CD8-positive, alpha-beta T cell (primary cell): ENCODE measurements at regions of chr1 and their contacts with region 1.

Region 1: DNA sequence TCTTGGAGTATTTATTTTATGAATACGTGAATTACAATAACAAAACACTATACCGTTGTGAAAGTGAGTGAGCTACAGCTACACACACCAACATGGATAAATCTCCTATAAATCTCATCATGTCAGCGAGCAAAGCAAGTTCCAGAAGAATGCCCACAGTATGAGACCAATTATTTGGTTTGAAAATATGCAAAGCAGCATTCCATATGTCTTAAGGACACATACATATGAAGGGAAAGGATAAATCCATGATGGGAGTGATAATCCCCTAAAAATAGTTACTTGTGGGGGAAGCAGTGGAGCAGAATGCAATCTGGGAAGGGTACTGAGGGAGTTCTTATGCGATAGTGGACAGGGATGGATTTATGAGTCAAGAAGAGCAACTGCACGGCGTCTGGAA is 261.3 kb downstream of the DISC1 start:
- DNase-seq: no peak
- ATAC-seq: no peak
- H3K4me3 ChIP-seq: no peak overlapping the region
- H3K4me3 Mint-ChIP-seq: no peak overlapping the region
- H3K27ac ChIP-seq: no peak overlapping the region
- H3K27ac Mint-ChIP-seq: no peak overlapping the region
- H3K4me1 ChIP-seq: no peaks in the 10 kb centered on the region
- H3K4me1 Mint-ChIP-seq: peaks cover 12% of the 10 kb centered on the region
- H3K27me3 ChIP-seq: no peaks in the 10 kb centered on the region
- H3K27me3 Mint-ChIP-seq: no peaks in the 10 kb centered on the region
- CTCF ChIP-seq: no peak

Region 2: DNA sequence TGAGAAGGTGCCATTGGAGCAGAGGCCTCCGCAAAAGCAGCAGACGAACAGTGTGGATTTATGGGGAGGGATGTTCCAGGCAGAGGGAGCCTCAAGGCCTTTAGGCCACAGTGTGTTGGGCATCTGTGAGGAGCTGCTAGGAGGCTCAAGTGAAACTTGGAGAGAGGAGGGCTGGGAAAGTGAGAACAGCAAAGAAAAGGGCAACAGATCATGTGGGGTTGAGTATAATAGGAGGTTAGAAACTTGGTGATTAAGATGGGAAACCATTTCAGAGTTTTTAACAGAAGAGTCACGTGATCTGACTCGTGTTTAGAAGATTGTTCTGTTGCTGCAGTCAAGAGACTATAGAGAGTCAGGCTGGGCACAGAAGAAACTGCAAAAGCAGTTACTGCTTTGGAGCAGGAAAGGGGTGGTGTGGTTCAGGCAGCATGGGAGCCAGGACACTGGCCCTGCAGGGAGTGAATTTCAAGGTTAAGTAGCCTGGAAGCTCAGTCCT is 15.8 kb after region 1 on chr1:
- CTCF ChIA-PET with region 1: no interaction called
- POLR2A ChIA-PET with region 1: no interaction called
- intact Hi-C with region 1: loop called in 1 of 2 experiments (anchors 2 kb)
- DNase-seq: no peak
- ATAC-seq: no peak
- H3K4me3 ChIP-seq: no peak overlapping the region
- H3K4me3 Mint-ChIP-seq: no peak overlapping the region
- H3K27ac ChIP-seq: no peak overlapping the region
- H3K27ac Mint-ChIP-seq: peak overlapping the region; percentile 37
- H3K4me1 ChIP-seq: no peaks in the 10 kb centered on the region
- H3K4me1 Mint-ChIP-seq: peaks cover 5% of the 10 kb centered on the region
- H3K27me3 ChIP-seq: no peaks in the 10 kb centered on the region
- H3K27me3 Mint-ChIP-seq: no peaks in the 10 kb centered on the region
- CTCF ChIP-seq: no peak